A549 (cell line): ENCODE measurements at regions of chr3 and their contacts with region 1.

Region 1: DNA sequence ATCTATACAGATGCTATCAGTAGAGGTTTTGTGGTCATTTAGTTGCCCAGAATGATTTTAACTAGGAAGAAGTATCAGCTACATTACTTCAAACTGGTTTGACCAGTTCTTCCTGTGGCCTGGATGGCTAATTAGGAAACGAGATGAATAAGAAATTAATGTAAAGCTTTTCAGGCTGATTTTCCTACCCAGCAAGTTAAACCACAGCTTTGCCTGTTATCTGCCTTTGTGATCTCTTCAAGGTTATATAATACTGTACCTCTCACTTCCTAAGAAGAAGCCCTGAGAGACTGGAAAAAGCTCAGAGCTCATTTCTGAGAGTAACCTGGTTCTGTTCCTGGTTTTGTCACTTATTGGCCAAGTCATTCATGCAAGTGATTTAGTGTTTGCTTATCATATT is 782.2 kb upstream of the GOLIM4 start:
- DNase-seq: no peak
- ATAC-seq: no peak
- H3K4me3 ChIP-seq: no peak overlapping the region
- H3K27ac ChIP-seq: no peak overlapping the region
- H3K4me1 ChIP-seq: no peaks in the 10 kb centered on the region; the same call in 2 of the 3 replicates
- CTCF ChIP-seq: no peak
- EP300 ChIP-seq: no peak
- POLR2A ChIP-seq: no peak
- RAD21 ChIP-seq: no peak

Region 2: GRCh38 chr3:168865022-168865551 is 12.8 kb before region 1 on chr3:
- CTCF ChIA-PET with region 1: interaction called, 12 read pairs
- POLR2A ChIA-PET with region 1: no interaction called
- DNase-seq: peak in 1 of 2 experiments; percentile 6
- ATAC-seq: no peak
- H3K4me3 ChIP-seq: no peak overlapping the region
- H3K27ac ChIP-seq: no peak overlapping the region
- H3K4me1 ChIP-seq: peaks cover under 1% of the 10 kb centered on the region; the same call in 1 of the 3 replicates
- CTCF ChIP-seq: peak; percentile 53
- EP300 ChIP-seq: no peak
- POLR2A ChIP-seq: no peak
- RAD21 ChIP-seq: peak; percentile 39 to 52; a peak in 4 of 5 replicates

Region 3: GRCh38 chr3:168933614-168934013 is 55.7 kb after region 1 on chr3:
- CTCF ChIA-PET with region 1: no interaction called
- POLR2A ChIA-PET with region 1: no interaction called
- DNase-seq: no peak
- ATAC-seq: no peak
- H3K4me3 ChIP-seq: no peak overlapping the region
- H3K27ac ChIP-seq: no peak overlapping the region
- H3K4me1 ChIP-seq: no peaks in the 10 kb centered on the region
- CTCF ChIP-seq: no peak
- EP300 ChIP-seq: no peak
- POLR2A ChIP-seq: no peak
- RAD21 ChIP-seq: no peak